ENCODE measurements at regions of chr18 and their contacts with region 1.

Region 1: GRCh38 chr18:864872-865273 is 39.8 kb upstream of the ADCYAP1 start:
- DNase-seq: peak; percentile 32 to 81 (median 45)
- ATAC-seq: peak; percentile 77
- H3K4me3 ChIP-seq: no peak overlapping the region
- H3K4me3 Mint-ChIP-seq: no peak overlapping the region
- H3K27ac ChIP-seq: no peak overlapping the region
- H3K27ac Mint-ChIP-seq: no peak overlapping the region
- H3K4me1 ChIP-seq: peaks cover 4% of the 10 kb centered on the region
- H3K4me1 Mint-ChIP-seq: peaks cover 7% of the 10 kb centered on the region
- H3K27me3 ChIP-seq: peaks cover 3 to 10% of the 10 kb centered on the region in 2 experiments
- H3K27me3 Mint-ChIP-seq: peaks cover 55% of the 10 kb centered on the region
- CTCF ChIP-seq: peak; percentile 75

Region 2: DNA sequence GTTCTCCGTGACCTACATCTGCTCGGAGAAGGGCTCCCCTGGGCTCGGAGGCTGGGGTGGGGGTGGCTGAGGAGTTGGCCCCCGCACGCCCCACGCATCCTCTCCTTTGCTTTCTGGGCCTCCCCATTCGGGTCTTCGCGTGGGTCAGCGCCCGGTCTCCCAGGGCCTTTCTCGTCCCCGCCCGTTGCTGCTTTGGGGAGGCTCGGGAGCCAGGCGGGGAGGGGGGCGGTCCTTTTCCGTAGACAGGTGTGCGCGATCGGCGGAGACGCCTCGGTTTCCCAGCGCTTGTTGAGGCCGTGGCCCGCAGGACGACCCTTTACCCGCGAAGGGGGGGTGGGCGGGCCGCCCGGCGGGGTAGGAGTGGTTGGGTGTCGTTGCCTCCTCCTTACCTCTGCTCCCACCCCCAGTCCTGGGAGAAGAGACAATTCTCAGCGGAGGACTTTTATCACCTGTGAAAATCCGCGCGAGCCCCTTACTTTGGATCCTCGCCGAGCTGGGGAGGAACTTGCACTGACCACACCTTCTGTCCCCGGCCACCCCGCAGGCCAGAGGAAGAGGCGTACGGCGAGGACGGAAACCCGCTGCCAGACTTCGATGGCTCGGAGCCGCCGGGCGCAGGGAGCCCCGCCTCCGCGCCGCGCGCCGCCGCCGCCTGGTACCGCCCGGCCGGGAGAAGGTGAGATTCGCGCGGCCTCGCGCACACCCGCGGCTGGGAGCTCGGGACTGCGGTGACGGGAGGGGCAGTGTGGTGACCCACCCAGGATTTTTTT is 42.4 kb after region 1 on chr18:
- CTCF ChIA-PET with region 1: no interaction called
- POLR2A ChIA-PET with region 1: no interaction called
- intact Hi-C with region 1: no loop called
- DNase-seq: peak in 3 of 14 experiments; percentile 2 to 13 (median 13)
- ATAC-seq: no peak
- H3K4me3 ChIP-seq: peak overlapping the region; percentile 43
- H3K4me3 Mint-ChIP-seq: no peak overlapping the region
- H3K27ac ChIP-seq: no peak overlapping the region
- H3K27ac Mint-ChIP-seq: no peak overlapping the region
- H3K4me1 ChIP-seq: peaks cover 40% of the 10 kb centered on the region
- H3K4me1 Mint-ChIP-seq: peaks cover 17% of the 10 kb centered on the region
- H3K27me3 ChIP-seq: peaks cover 68 to 91% of the 10 kb centered on the region in 2 experiments
- H3K27me3 Mint-ChIP-seq: peaks cover 82% of the 10 kb centered on the region
- CTCF ChIP-seq: no peak

Region 3: GRCh38 chr18:961644-962355 is 96.9 kb after region 1 on chr18:
- CTCF ChIA-PET with region 1: interaction called, 4 read pairs
- POLR2A ChIA-PET with region 1: no interaction called
- intact Hi-C with region 1: loop called (anchors 1 to 5 kb)
- DNase-seq: peak; percentile 4 to 56 (median 26)
- ATAC-seq: no peak
- H3K4me3 ChIP-seq: no peak overlapping the region
- H3K4me3 Mint-ChIP-seq: no peak overlapping the region
- H3K27ac ChIP-seq: no peak overlapping the region
- H3K27ac Mint-ChIP-seq: no peak overlapping the region
- H3K4me1 ChIP-seq: peaks cover 3% of the 10 kb centered on the region
- H3K4me1 Mint-ChIP-seq: peaks cover 7% of the 10 kb centered on the region
- H3K27me3 ChIP-seq: peaks cover 8 to 19% of the 10 kb centered on the region in 2 experiments
- H3K27me3 Mint-ChIP-seq: peaks cover 53% of the 10 kb centered on the region
- CTCF ChIP-seq: peak; percentile 90